ENCODE measurements at regions of chr17 and their contacts with region 1.

Region 1: GRCh38 chr17:50161023-50161910 is 4.5 kb upstream of the SGCA start:
- DNase-seq: peak; percentile 100
- H3K4me3 ChIP-seq: peak overlapping the region; percentile 60 to 72
- H3K27ac ChIP-seq: peak overlapping the region; percentile 3 to 91; a peak in 3 of 4 replicates
- H3K4me1 ChIP-seq: peaks cover 3 to 10% of the 10 kb centered on the region in 2 experiments; a peak in 1 of 4 replicates
- H3K27me3 ChIP-seq: no peaks in the 10 kb centered on the region
- CTCF ChIP-seq: peak; percentile 97
- EP300 ChIP-seq: peak in 1 of 2 experiments; percentile 44; a peak in 1 of 4 replicates
- RAD21 ChIP-seq: peak; percentile 72

Region 2: DNA sequence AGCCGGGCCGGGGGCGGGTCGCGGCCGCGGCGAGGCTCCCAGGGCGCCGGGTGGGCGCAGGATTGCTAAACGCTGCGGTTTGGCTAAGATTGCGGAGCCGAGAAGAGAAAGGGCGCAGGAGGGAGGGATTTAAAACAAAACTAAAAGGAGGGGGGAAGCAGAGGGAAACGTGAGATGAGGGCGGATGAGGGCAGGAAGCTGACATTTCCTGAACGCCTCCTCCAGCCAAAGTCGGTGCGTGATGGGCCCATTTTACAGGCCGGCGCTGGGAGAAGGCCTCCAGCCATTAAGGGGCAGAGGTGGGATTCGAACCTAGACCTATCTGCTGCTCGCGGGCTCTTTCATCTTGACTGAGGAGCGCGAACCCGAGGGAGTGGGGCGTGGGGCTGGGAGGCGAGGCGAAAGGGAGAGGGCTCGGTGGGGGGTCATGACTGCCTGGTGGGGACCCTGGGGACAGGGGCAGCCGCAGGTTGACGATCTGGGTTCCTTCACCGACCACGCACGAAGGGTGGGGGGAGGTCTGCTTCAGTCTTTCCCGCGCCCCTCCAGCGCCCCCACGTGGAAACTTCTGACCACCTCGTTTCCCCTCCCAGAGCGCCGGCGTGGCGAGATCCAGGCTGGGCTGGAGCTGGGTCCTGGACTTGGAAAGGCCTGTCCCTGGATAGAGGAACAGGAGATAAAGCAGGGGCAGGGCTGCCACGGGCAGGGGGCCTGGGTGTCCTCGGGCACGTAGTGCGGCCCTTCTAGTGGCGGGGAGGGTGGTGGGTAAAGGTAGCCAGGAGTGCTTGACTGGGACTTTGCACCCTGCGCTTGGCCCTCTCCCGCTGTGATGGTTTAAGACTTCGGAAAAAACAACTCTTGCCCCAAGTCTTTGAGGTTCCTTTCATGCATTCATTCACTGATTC is 309.6 kb before region 1 on chr17:
- CTCF ChIA-PET with region 1: no interaction called
- POLR2A ChIA-PET with region 1: no interaction called
- DNase-seq: peak; percentile 92
- H3K4me3 ChIP-seq: peak overlapping the region; percentile 59 to 66
- H3K27ac ChIP-seq: no peak overlapping the region
- H3K4me1 ChIP-seq: peaks cover 4 to 14% of the 10 kb centered on the region in 2 experiments; a peak in 1 of 4 replicates
- H3K27me3 ChIP-seq: peaks cover 10% of the 10 kb centered on the region; the same call in 1 of the 2 replicates
- CTCF ChIP-seq: peak; percentile 90
- EP300 ChIP-seq: no peak
- RAD21 ChIP-seq: peak; percentile 71

Region 3: GRCh38 chr17:50101346-50102163 is 59.7 kb before region 1 on chr17:
- CTCF ChIA-PET with region 1: interaction called, 26 read pairs
- POLR2A ChIA-PET with region 1: no interaction called
- DNase-seq: peak; percentile 89
- H3K4me3 ChIP-seq: no peak overlapping the region
- H3K27ac ChIP-seq: peak overlapping the region in 1 of 2 experiments; percentile 58; a peak in 2 of 4 replicates
- H3K4me1 ChIP-seq: peaks cover 0 to 28% of the 10 kb centered on the region in 2 experiments; a peak in 1 of 4 replicates
- H3K27me3 ChIP-seq: no peaks in the 10 kb centered on the region
- CTCF ChIP-seq: no peak
- EP300 ChIP-seq: 0 out of 4 replicates have a peak, but pooled peaks of 1 of the 2 experiments have one; percentile 4
- RAD21 ChIP-seq: no peak

Region 4: GRCh38 chr17:50114849-50115357 is 46.4 kb before region 1 on chr17:
- CTCF ChIA-PET with region 1: interaction called, 71 read pairs
- POLR2A ChIA-PET with region 1: interaction called, 5 read pairs
- DNase-seq: peak; percentile 79
- H3K4me3 ChIP-seq: no peak overlapping the region
- H3K27ac ChIP-seq: no peak overlapping the region
- H3K4me1 ChIP-seq: peaks cover 0 to 24% of the 10 kb centered on the region in 2 experiments; a peak in 1 of 4 replicates
- H3K27me3 ChIP-seq: no peaks in the 10 kb centered on the region
- CTCF ChIP-seq: peak; percentile 93
- EP300 ChIP-seq: no peak
- RAD21 ChIP-seq: peak; percentile 75

Region 5: DNA sequence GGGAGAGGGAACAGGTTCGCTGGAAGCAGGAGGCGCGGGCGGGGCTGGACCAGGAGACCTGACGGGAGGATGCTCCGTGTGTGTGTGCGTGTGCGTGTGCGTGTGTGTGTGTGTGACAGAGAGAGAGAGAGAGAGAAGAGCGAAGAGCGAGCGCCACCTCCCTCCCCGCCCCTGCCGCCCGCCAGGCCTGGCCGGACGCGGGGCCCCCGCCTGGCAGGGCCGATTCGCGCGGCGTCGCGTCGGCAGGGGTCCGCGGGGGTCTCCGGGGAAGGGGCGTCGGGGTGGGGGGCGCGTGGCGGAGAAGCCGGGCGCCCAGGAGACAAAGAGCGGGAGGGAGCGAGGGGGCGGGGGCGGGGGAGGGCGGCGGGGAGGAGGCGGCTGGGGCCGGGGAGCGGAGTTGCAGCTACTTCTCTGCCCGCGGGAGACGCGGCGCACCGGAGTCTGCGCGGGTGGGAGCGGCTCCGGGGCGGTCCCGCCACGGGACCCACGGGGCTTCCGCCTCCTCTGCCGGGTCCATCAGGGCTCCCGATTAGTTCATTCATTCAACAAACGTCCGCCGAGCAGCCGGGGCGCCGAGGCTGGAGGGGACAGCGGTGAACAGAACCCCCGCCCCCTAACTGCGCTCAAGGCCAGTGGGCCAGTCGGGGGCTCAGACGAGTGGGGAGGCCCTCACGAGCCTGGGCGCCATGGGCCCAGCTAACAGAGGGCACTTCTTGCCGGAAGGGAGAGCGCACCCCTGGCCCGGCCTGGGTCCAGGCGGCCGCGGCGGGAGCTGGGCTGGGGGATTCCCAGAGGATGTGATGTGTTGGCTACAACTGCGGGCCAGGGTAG is 31.3 kb before region 1 on chr17 and contains the start of gene SAMD14:
- CTCF ChIA-PET with region 1: interaction called, 169 read pairs
- POLR2A ChIA-PET with region 1: interaction called, 5 read pairs
- DNase-seq: peak; percentile 96
- H3K4me3 ChIP-seq: peak within 1 kb of the TSS; percentile 61 to 70
- H3K27ac ChIP-seq: peak within 1 kb of the TSS in 1 of 2 experiments; percentile 69; a peak in 1 of 4 replicates
- H3K4me1 ChIP-seq: peaks cover 20 to 23% of the 10 kb centered on the region in 2 experiments; a peak in 3 of 4 replicates
- H3K27me3 ChIP-seq: no peaks in the 10 kb centered on the region
- CTCF ChIP-seq: no peak
- EP300 ChIP-seq: no peak
- RAD21 ChIP-seq: no peak
- polyA plus RNA-seq, gene SAMD14: 2.8 and 3.4 TPM in 2 replicates

Region 6: GRCh38 chr17:50177983-50178834 is 16.9 kb after region 1 on chr17:
- CTCF ChIA-PET with region 1: interaction called, 33 read pairs
- POLR2A ChIA-PET with region 1: interaction called, 17 read pairs
- DNase-seq: peak; percentile 93
- H3K4me3 ChIP-seq: peak overlapping the region in 1 of 2 experiments; percentile 15; a peak in 1 of 4 replicates
- H3K27ac ChIP-seq: peak overlapping the region; percentile 94 to 100
- H3K4me1 ChIP-seq: peaks cover 29 to 52% of the 10 kb centered on the region in 2 experiments; a peak in 3 of 4 replicates
- H3K27me3 ChIP-seq: no peaks in the 10 kb centered on the region
- CTCF ChIP-seq: peak; percentile 77
- EP300 ChIP-seq: peak; percentile 27 to 36; a peak in 2 of 4 replicates
- RAD21 ChIP-seq: peak; percentile 53

Region 7: GRCh38 chr17:50289991-50290702 is 128.9 kb after region 1 on chr17:
- CTCF ChIA-PET with region 1: interaction called, 388 read pairs
- POLR2A ChIA-PET with region 1: no interaction called
- DNase-seq: no peak
- H3K4me3 ChIP-seq: peak overlapping the region in 1 of 2 experiments; percentile 18; a peak in 2 of 4 replicates
- H3K27ac ChIP-seq: peak overlapping the region in 1 of 2 experiments; percentile 79; a peak in 2 of 4 replicates
- H3K4me1 ChIP-seq: peaks cover 0 to 27% of the 10 kb centered on the region in 2 experiments; a peak in 3 of 4 replicates
- H3K27me3 ChIP-seq: no peaks in the 10 kb centered on the region
- CTCF ChIP-seq: no peak
- EP300 ChIP-seq: no peak; a peak in 1 of 4 replicates
- RAD21 ChIP-seq: no peak

Region 8: GRCh38 chr17:50361561-50362480 is 200.6 kb after region 1 on chr17:
- CTCF ChIA-PET with region 1: interaction called, 10 read pairs
- POLR2A ChIA-PET with region 1: no interaction called
- DNase-seq: peak; percentile 90
- H3K4me3 ChIP-seq: no peak overlapping the region; a peak in 1 of 4 replicates
- H3K27ac ChIP-seq: peak overlapping the region in 1 of 2 experiments; percentile 59; a peak in 2 of 4 replicates
- H3K4me1 ChIP-seq: peaks cover 9 to 25% of the 10 kb centered on the region in 2 experiments; a peak in 2 of 4 replicates
- H3K27me3 ChIP-seq: no peaks in the 10 kb centered on the region
- CTCF ChIP-seq: peak; percentile 92
- EP300 ChIP-seq: no peak
- RAD21 ChIP-seq: peak; percentile 66

Measured in SK-N-SH (cell line).